Activated T-helper 1 cell treated with anti-CD3 and anti-CD28 coated beads, Interleukin-12 subunit alpha, Interleukin-12 subunit beta, Interleukin-2, Interleukin-4 antibody, amounts not matched to agents 30 ng/mL and 10 ng/mL and 1 ng/mL, durations not matched to agents 14 hours and 24 hours and 36 hours (primary cell): ENCODE measurements at regions of chr3 and their contacts with region 1.

Region 1: GRCh38 chr3:72134989-72135451 is 350.1 kb upstream of the PROK2 start:
- DNase-seq: no peak
- H3K4me3 Mint-ChIP-seq: peak overlapping the region; percentile 60
- H3K27ac Mint-ChIP-seq: peak overlapping the region; percentile 89
- H3K4me1 Mint-ChIP-seq: peaks cover 48% of the 10 kb centered on the region
- H3K27me3 Mint-ChIP-seq: peaks cover 2% of the 10 kb centered on the region

Region 2: GRCh38 chr3:71875461-71875947 is 259.5 kb before region 1 on chr3:
- intact Hi-C with region 1: loop called (anchors 1 kb)
- DNase-seq: peak; percentile 67
- H3K4me3 Mint-ChIP-seq: no peak overlapping the region
- H3K27ac Mint-ChIP-seq: peak overlapping the region; percentile 59
- H3K4me1 Mint-ChIP-seq: peaks cover 38% of the 10 kb centered on the region
- H3K27me3 Mint-ChIP-seq: peaks cover 8% of the 10 kb centered on the region

Region 3: DNA sequence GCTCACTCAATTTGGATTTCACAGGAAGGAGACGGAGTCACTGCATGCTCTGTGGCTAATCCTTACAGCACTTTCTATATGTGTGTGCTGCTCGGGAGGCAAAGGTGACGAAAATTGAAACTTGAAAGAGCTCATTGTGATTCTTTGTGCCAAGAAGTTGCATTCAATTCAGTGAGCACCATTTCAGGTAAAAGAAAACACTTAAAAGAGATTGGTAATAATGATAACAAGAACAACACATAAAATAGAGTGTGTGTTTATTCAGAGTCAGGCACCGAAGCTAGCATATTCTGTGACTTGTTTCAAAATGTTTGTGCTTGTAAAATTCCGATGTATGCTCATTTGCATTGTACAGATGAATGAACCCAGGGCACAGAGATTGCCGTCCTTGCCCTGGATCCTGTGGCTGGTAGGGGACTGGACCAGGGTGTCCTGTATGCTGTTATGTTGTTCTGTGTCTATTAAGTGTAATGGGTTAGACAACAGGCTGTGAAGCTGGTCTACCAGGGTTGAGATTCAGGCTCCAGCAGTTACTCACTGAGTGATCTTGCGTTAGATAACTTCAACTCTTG is 156.8 kb before region 1 on chr3:
- intact Hi-C with region 1: loop called (anchors 1 kb)
- DNase-seq: peak; percentile 14
- H3K4me3 Mint-ChIP-seq: peak overlapping the region; percentile 53
- H3K27ac Mint-ChIP-seq: peak overlapping the region; percentile 13
- H3K4me1 Mint-ChIP-seq: peaks cover 47% of the 10 kb centered on the region
- H3K27me3 Mint-ChIP-seq: no peaks in the 10 kb centered on the region

Region 4: GRCh38 chr3:71998995-71999673 is 135.9 kb before region 1 on chr3:
- intact Hi-C with region 1: loop called (anchors 5 kb)
- DNase-seq: no peak
- H3K4me3 Mint-ChIP-seq: no peak overlapping the region
- H3K27ac Mint-ChIP-seq: peak overlapping the region; percentile 63
- H3K4me1 Mint-ChIP-seq: peaks cover 44% of the 10 kb centered on the region
- H3K27me3 Mint-ChIP-seq: no peaks in the 10 kb centered on the region

Region 5: DNA sequence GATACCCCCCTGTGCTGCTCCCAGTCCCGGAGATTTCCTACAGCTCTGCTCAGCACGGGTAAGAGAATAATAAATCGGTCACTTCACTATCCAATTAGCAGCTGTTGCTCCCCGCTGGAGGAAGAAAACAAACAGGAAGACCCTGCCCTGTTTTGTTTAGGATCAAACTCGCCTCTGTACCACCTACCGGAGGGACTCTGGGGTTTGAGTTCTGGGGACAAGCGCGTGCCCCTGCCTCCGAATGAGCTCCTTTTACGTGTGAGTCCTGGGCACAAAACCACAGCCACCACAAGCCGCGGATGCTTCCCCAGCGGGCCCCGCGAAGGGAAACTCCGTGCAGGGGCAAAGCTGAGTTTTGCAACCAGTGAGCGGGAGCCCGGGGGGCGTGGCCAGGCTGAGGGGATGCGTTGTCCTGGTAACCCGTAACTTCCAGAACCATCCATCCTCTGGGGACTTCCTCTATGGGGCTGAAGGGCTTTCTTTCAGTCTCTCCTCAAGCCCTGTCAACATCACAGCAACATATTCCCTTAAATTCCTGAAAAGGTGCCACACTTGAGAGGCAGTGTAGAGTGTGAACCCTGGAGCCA is 34.3 kb before region 1 on chr3:
- intact Hi-C with region 1: loop called (anchors 1 kb)
- DNase-seq: peak; percentile 95
- H3K4me3 Mint-ChIP-seq: peak overlapping the region; percentile 78
- H3K27ac Mint-ChIP-seq: peak overlapping the region; percentile 88
- H3K4me1 Mint-ChIP-seq: peaks cover 32% of the 10 kb centered on the region
- H3K27me3 Mint-ChIP-seq: peaks cover 5% of the 10 kb centered on the region

Region 6: GRCh38 chr3:72339116-72340030 is 204.4 kb after region 1 on chr3:
- intact Hi-C with region 1: loop called (anchors 2 kb)
- DNase-seq: no peak
- H3K4me3 Mint-ChIP-seq: no peak overlapping the region
- H3K27ac Mint-ChIP-seq: no peak overlapping the region
- H3K4me1 Mint-ChIP-seq: peaks cover 32% of the 10 kb centered on the region
- H3K27me3 Mint-ChIP-seq: peaks cover under 1% of the 10 kb centered on the region

Region 7: DNA sequence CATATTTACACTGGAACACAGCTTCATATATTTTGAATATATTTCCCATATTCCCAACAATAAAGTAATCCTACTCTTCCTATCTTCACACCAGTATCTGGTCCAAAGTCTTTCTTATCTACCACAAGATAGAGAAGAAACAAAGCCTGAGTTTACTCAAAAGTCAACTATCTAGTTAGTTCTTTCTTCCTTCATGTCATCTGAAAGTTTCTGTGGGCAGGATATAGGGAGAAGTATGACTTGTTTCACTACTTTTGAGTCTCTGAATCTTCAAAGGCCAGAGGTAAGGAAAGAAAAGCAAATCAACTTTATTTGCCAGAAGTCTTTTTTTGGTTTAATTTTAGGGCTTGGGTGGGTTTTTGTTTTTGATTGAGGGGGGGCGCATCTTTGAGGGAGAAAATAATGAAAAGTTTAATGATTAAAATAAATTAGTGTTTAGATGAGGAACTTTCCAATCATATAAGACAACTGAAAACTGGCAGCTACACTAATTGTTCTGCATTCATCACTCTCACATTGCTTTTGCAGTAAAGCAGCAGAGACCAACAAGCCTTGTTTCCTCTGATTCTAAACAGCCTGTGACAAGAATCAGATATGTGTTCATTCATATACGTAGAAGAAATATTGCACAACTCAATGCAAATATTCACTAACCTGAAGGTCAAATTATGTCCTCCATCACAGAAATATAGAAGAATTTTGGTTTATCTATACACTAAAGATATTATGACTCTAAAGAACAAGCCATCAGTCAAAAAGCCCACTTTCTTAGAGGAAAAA is 291.8 kb after region 1 on chr3:
- intact Hi-C with region 1: loop called (anchors 5 kb)
- DNase-seq: no peak
- H3K4me3 Mint-ChIP-seq: peak overlapping the region; percentile 69
- H3K27ac Mint-ChIP-seq: peak overlapping the region; percentile 97
- H3K4me1 Mint-ChIP-seq: peaks cover 62% of the 10 kb centered on the region
- H3K27me3 Mint-ChIP-seq: no peaks in the 10 kb centered on the region